Tibial artery (tissue), 4 donors: ENCODE measurements at regions of chr6 and their contacts with region 1.

Region 1: GRCh38 chr6:16332175-16332542 is 93.8 kb downstream of the GMPR start:
- DNase-seq: peak; percentile 74 to 88
- H3K4me3 ChIP-seq: no peak overlapping the region
- H3K27ac ChIP-seq: peak overlapping the region in 1 of 2 donors; percentile 27
- H3K4me1 ChIP-seq: peaks cover 4 to 52% (median 36%) of the 10 kb centered on the region in 4 donors
- H3K27me3 ChIP-seq: no peaks in the 10 kb centered on the region
- CTCF ChIP-seq: peak; percentile 89 to 91

Region 2: GRCh38 chr6:16345437-16346330 is 13.5 kb after region 1 on chr6:
- intact Hi-C with region 1: no loop called
- DNase-seq: no peak
- H3K4me3 ChIP-seq: no peak overlapping the region
- H3K27ac ChIP-seq: no peak overlapping the region
- H3K4me1 ChIP-seq: peaks cover 0 to 29% (median 6%) of the 10 kb centered on the region in 4 donors
- H3K27me3 ChIP-seq: no peaks in the 10 kb centered on the region
- CTCF ChIP-seq: no peak

Region 3: DNA sequence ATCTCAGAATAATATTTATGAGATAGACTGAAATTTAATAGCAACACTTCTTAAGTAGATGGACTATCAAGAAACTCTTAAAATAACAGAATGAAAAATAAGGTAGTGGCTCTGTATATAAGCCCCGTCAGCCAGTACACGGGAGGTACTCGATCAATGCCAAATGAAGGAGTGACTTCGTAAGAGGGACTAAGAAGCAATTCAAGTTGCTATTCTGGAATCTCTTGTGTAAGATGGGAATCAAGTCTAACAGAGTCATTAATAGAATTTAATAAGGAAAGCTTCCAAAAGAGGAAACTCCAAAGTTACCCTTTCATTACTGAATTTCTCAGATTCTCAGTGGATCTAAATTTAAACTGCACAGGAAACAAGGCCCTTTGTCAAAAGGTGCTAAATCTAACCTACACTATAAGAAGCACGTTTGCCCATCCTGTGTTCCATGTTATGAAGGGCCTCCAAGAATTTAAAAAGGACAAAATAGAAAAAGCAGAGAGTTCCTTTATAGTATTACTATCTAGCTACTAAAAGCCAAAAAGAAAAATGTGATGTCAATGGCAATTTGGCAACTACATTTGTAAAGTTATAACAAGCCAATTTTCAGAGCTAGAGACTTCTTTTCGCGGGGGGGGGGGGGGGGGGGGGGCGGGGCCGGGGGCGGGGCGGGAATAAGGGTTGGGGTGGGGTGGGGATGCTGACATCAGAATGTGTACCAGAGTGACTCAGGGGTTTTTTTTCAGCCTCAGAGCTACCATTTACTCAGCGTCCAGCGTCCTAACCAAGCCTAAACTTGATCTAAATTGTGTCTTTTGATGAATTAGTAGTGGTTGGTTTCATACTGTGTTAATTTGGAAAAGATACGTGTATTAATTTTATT is 106.8 kb after region 1 on chr6:
- intact Hi-C with region 1: no loop called
- DNase-seq: no peak
- H3K4me3 ChIP-seq: no peak overlapping the region
- H3K27ac ChIP-seq: peak overlapping the region; percentile 38 to 71
- H3K4me1 ChIP-seq: peaks cover 0 to 81% (median 26%) of the 10 kb centered on the region in 4 donors
- H3K27me3 ChIP-seq: no peaks in the 10 kb centered on the region
- CTCF ChIP-seq: no peak

Region 4: DNA sequence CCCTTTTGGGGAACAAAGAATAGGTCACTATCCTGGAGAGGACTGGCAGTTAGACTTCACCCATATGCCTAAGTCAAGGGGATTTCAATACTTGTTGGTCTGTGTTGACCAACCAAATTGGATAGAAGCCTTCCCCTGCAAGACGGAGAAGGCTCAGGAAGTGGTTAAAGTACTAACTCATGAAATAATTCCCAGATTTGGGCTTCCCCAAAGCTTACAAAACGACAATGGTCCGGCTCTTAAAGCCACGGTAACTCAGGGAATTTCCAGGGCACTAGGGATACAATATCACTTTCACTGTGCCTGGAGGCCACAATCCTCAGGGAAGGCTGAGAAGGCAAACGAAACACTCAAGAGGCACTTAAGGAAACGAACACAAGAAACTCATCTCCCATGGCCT is 129.3 kb after region 1 on chr6:
- intact Hi-C with region 1: no loop called
- DNase-seq: no peak
- H3K4me3 ChIP-seq: no peak overlapping the region
- H3K27ac ChIP-seq: no peak overlapping the region
- H3K4me1 ChIP-seq: peaks cover 0 to 6% (median 0%) of the 10 kb centered on the region in 4 donors
- H3K27me3 ChIP-seq: no peaks in the 10 kb centered on the region
- CTCF ChIP-seq: no peak

Region 5: DNA sequence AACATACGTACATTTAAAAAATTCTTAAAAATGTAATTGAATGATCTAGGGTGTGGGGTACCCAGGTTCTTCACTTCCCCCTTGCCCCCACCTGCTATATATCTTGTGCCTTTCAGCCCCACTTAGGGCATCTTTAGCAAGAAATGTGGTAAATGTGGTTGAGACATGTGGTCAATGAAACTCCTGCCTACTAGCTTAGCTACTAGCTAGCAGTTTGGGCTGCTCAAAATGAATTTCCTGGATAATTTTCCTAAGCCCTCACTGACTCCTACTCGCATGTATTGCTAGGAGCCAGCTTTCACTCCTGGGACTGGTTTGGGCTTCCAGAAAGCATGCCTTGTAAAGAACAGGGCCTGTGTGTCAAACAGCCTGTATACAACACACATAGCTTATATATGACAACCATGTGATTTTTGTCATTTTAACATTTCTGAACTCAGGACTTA is 171.8 kb after region 1 on chr6:
- intact Hi-C with region 1: loop called (anchors 10 kb)
- DNase-seq: no peak
- H3K4me3 ChIP-seq: no peak overlapping the region
- H3K27ac ChIP-seq: peak overlapping the region; percentile 22 to 65
- H3K4me1 ChIP-seq: peaks cover 0 to 35% (median 22%) of the 10 kb centered on the region in 4 donors
- H3K27me3 ChIP-seq: no peaks in the 10 kb centered on the region
- CTCF ChIP-seq: no peak

Region 6: GRCh38 chr6:16964553-16965501 is 632.7 kb after region 1 on chr6:
- intact Hi-C with region 1: loop called (anchors 10 kb)
- DNase-seq: peak; percentile 64 to 82
- H3K4me3 ChIP-seq: peak overlapping the region in 1 of 2 donors; percentile 26
- H3K27ac ChIP-seq: no peak overlapping the region
- H3K4me1 ChIP-seq: peaks cover 0 to 8% (median 7%) of the 10 kb centered on the region in 4 donors
- H3K27me3 ChIP-seq: peaks cover 0 to 2% of the 10 kb centered on the region in 2 donors
- CTCF ChIP-seq: peak; percentile 81 to 88